Astrocyte of the cerebellum (primary cell): ENCODE measurements at regions of chr22 and their contacts with region 1.

Region 1: GRCh38 chr22:27474711-27475547 is 326.6 kb downstream of the MN1 start:
- DNase-seq: peak; percentile 92
- H3K4me3 ChIP-seq: no peak overlapping the region
- CTCF ChIP-seq: no peak

Region 2: GRCh38 chr22:26679003-26679629 is 795.8 kb before region 1 on chr22:
- in situ Hi-C with region 1: loop called (anchors 25 kb)
- DNase-seq: peak; percentile 55
- H3K4me3 ChIP-seq: no peak overlapping the region
- CTCF ChIP-seq: peak; percentile 98

Region 3: DNA sequence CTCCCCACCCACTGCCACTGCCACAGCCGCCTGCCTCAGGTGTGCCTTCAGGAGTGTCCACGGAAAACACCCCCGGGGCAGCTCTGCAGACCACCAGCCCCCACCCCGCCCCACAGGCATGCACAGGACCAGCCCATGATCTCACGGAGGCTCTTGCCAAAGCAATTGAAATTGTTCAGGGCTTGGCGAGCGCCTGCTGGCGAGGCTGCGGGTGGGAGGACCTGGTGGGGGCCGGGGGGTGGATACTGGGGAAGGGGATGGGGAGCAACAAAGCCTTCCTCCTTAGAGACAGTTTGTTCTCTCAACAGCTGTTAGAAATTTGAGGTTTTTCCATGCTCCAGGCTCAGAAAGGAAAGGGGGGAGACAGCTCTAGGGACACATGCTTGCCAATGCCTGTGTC is 52.0 kb after region 1 on chr22:
- in situ Hi-C with region 1: loop called (anchors 5 kb)
- DNase-seq: no peak
- H3K4me3 ChIP-seq: no peak overlapping the region
- CTCF ChIP-seq: no peak

Region 4: GRCh38 chr22:27754247-27754887 is 279.4 kb after region 1 on chr22:
- in situ Hi-C with region 1: no loop called
- DNase-seq: peak; percentile 52
- H3K4me3 ChIP-seq: no peak overlapping the region
- CTCF ChIP-seq: no peak